Prostate gland (tissue), 2 donors: ENCODE measurements at regions of chr3 and their contacts with region 1.

Region 1: DNA sequence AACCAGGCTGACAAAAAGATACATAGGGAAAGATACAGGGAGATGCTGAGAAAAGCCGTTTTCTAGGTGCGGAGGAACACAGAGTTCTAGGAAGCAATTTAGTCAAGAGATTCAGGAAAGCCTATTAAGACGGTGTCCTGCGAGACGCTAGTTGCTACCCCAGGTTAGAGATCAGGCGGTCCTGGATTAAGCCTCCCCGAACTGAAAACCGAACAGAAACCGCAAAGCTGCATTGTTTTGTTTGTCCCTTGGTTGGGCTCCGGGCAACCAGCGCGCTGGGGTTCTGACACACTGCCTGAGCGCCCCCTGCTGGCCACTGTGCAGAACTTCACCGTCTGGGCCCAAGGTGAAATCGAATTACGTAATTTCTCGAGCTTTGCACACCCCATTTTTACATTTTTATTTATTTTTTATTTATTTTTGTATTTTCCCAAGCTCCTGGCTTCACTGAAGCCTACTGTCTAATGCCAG is 37.3 kb upstream of the NDUFB4 start:
- DNase-seq: peak; percentile 82
- H3K4me3 ChIP-seq: peak overlapping the region; percentile 24 to 35
- H3K27ac ChIP-seq: peak overlapping the region; percentile 76 to 81
- H3K4me1 ChIP-seq: peaks cover 22% of the 10 kb centered on the region
- H3K27me3 ChIP-seq: no peaks in the 10 kb centered on the region
- CTCF ChIP-seq: peak; percentile 96 to 100 (median 99)
- POLR2A ChIP-seq: no peak

Region 2: GRCh38 chr3:119891944-119892721 is 666.7 kb before region 1 on chr3:
- intact Hi-C with region 1: loop called (anchors 10 kb)
- DNase-seq: peak; percentile 35
- H3K4me3 ChIP-seq: no peak overlapping the region
- H3K27ac ChIP-seq: no peak overlapping the region
- H3K4me1 ChIP-seq: no peaks in the 10 kb centered on the region
- H3K27me3 ChIP-seq: no peaks in the 10 kb centered on the region
- CTCF ChIP-seq: peak; percentile 40 to 80 (median 76)
- POLR2A ChIP-seq: no peak

Region 3: GRCh38 chr3:120245386-120245785 is 313.4 kb before region 1 on chr3:
- intact Hi-C with region 1: loop called (anchors 2 kb)
- DNase-seq: no peak
- H3K4me3 ChIP-seq: no peak overlapping the region
- H3K27ac ChIP-seq: no peak overlapping the region
- H3K4me1 ChIP-seq: no peaks in the 10 kb centered on the region
- H3K27me3 ChIP-seq: no peaks in the 10 kb centered on the region
- CTCF ChIP-seq: no peak
- POLR2A ChIP-seq: no peak

Region 4: DNA sequence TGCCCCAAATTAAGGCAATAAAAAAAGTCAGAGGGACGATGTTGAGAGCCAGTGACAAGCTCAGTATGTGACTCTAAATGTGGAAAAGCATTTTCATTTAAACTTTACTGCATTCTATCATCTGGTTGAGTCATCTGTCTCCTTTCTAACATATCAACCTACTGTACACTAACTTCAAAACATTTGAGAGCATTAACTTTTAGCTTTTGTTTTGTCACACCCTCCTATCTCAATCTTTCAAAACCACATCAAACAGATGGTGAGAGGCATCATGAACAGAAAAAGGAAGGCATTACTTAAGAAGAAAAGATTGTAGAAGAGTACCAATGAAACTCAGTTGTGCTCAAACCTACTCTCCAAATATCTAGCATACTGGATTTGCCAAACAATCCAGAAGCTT is 214.5 kb before region 1 on chr3:
- intact Hi-C with region 1: loop called (anchors 2 kb)
- DNase-seq: no peak
- H3K4me3 ChIP-seq: no peak overlapping the region
- H3K27ac ChIP-seq: no peak overlapping the region
- H3K4me1 ChIP-seq: no peaks in the 10 kb centered on the region
- H3K27me3 ChIP-seq: no peaks in the 10 kb centered on the region
- CTCF ChIP-seq: no peak
- POLR2A ChIP-seq: no peak

Region 5: GRCh38 chr3:120417272-120417911 is 141.4 kb before region 1 on chr3:
- intact Hi-C with region 1: loop called (anchors 2 kb)
- DNase-seq: peak; percentile 94
- H3K4me3 ChIP-seq: peak overlapping the region in 1 of 2 donors; percentile 5
- H3K27ac ChIP-seq: peak overlapping the region; percentile 71 to 72
- H3K4me1 ChIP-seq: peaks cover 35% of the 10 kb centered on the region
- H3K27me3 ChIP-seq: no peaks in the 10 kb centered on the region
- CTCF ChIP-seq: peak; percentile 76 to 97 (median 90)
- POLR2A ChIP-seq: peak; percentile 24

Region 6: GRCh38 chr3:120498556-120499346 is 60.1 kb before region 1 on chr3:
- intact Hi-C with region 1: no loop called
- DNase-seq: no peak
- H3K4me3 ChIP-seq: no peak overlapping the region
- H3K27ac ChIP-seq: no peak overlapping the region
- H3K4me1 ChIP-seq: no peaks in the 10 kb centered on the region
- H3K27me3 ChIP-seq: no peaks in the 10 kb centered on the region
- CTCF ChIP-seq: no peak
- POLR2A ChIP-seq: no peak

Region 7: GRCh38 chr3:120795017-120795648 is 236.3 kb after region 1 on chr3:
- intact Hi-C with region 1: loop called (anchors 1 kb)
- DNase-seq: peak; percentile 67
- H3K4me3 ChIP-seq: no peak overlapping the region
- H3K27ac ChIP-seq: no peak overlapping the region
- H3K4me1 ChIP-seq: no peaks in the 10 kb centered on the region
- H3K27me3 ChIP-seq: no peaks in the 10 kb centered on the region
- CTCF ChIP-seq: peak; percentile 43 to 75 (median 72)
- POLR2A ChIP-seq: no peak

Region 8: DNA sequence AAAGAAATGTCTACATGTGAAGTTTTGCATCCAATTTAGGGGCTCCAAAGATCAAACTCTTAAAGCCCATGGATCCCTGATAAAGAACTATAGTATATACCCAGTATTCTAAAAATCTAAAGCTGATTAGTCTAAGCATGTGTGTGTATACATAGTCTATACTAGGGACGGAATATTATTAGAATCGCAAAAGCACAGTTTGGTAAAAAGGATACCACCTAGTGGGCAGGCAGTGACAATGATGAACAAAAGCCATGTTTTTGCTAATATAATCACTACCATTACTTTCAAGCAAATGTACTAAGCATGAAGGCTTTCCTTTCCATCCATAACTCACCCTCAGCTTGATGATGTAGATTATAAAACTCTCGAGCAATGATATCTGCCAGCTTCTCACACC is 970.5 kb after region 1 on chr3:
- intact Hi-C with region 1: loop called (anchors 10 kb)
- DNase-seq: no peak
- H3K4me3 ChIP-seq: no peak overlapping the region
- H3K27ac ChIP-seq: no peak overlapping the region
- H3K4me1 ChIP-seq: no peaks in the 10 kb centered on the region
- H3K27me3 ChIP-seq: no peaks in the 10 kb centered on the region
- CTCF ChIP-seq: peak in 1 of 4 experiments; percentile 34
- POLR2A ChIP-seq: no peak